CD8-positive, alpha-beta memory T cell (primary cell): ENCODE measurements at regions of chr1 and their contacts with region 1.

Region 1: DNA sequence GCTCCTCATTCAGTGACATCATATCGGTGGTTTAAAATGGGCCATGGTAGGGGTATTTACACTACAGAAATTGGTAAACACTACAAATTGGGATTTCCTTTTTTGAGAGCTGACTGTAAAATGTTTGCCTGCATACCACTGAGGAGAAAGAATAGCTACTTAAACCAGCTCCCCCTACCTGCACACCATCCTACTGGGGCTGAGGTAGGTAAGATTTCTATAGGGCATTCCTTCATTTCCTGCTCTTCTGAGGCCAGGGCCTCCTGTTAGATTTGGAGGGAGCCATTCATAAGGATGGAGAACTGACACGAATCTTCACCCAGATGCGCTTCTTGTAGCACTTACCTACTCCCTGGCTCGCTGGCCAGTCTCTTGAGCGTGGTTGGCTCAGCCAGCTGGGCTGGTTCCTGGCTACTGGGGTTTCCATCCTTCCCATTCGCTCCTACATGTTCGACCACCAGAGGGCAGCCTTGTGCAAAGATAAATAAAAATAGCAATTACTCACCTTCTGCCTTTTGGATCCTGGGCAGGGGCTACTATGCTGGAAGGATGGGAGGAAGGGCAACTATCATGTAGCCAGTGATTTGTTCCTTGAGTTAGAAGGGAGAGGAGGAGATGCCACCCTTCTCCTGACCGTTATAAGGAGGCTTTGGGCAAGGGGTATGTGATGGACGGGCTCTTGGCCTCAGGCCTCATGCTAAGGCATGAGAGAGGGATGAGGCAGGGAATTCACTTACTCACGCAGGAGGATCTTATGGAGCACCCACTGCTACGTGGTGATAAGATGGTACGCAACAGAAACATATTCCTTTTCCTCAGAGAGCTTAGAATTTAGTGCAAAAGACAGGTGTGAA is 10.7 kb downstream of the OPTC start:
- DNase-seq: peak; percentile 51 to 77 (median 58)
- H3K4me3 ChIP-seq: no peak overlapping the region
- H3K4me3 Mint-ChIP-seq: no peak overlapping the region
- H3K27ac ChIP-seq: no peak overlapping the region
- H3K27ac Mint-ChIP-seq: no peak overlapping the region
- H3K4me1 ChIP-seq: no peaks in the 10 kb centered on the region
- H3K4me1 Mint-ChIP-seq: peaks cover 1 to 6% (median 5%) of the 10 kb centered on the region in 3 donors
- H3K27me3 ChIP-seq: no peaks in the 10 kb centered on the region
- H3K27me3 Mint-ChIP-seq: peaks cover 3 to 4% of the 10 kb centered on the region in 2 donors

Region 2: DNA sequence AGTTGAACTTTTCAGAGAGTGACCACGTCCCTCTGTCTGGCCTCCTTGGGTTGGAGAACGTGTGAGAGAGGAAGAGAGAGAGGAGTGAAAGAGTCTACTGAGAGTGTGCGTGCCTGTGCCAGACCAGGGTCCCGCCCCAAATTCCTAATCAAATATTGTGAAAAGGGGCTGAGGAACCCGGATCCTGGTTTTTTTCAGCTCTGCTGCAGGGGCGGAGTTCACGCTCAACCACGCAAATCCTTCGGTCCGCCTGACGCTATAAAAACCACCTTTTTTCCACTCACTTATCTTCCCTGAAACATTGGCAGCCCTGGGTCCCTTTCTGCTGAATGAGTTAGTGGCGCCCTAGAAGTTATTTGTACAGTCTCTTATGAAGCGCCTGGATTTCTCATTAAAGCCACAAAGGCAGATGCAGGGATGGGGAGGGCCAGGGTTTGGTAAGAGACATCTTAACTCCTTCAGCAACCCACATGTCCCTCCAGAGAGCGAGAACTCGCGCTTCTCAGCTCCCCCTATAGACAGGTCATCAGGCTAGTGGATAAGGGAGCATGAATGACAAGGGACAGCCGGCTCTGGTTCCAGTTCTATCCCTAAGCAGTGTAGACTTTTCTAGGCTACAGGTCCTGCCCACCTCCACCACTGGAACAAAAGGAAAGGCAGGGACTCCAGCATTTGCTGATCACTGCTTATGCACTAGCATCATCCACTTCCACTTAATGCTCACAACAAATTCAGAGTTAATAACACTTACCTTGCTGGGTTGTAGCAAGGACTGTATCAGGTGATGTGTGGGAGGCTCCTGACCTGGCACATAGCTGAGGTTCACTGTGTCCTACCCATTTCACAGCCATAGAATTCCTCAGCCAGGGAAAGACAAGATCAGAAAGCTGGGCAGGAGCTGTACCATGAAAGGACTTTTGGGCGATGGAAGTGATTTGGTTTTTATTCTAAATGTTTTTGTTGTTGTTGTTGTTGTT is 153.3 kb before region 1 on chr1 and contains the start of gene FMOD:
- CTCF ChIA-PET with region 1: no interaction called
- POLR2A ChIA-PET with region 1: no interaction called
- DNase-seq: no peak
- H3K4me3 ChIP-seq: no peak within 1 kb of the TSS
- H3K4me3 Mint-ChIP-seq: no peak within 1 kb of the TSS
- H3K27ac ChIP-seq: no peak within 1 kb of the TSS
- H3K27ac Mint-ChIP-seq: no peak within 1 kb of the TSS
- H3K4me1 ChIP-seq: no peaks in the 10 kb centered on the region
- H3K4me1 Mint-ChIP-seq: peaks cover 0 to 3% (median 0%) of the 10 kb centered on the region in 3 donors
- H3K27me3 ChIP-seq: peaks cover 19% of the 10 kb centered on the region
- H3K27me3 Mint-ChIP-seq: peaks cover 32 to 79% of the 10 kb centered on the region in 2 donors
- total RNA-seq, gene FMOD: 0.51 to 1.2 TPM

Region 3: GRCh38 chr1:203480525-203481084 is 24.0 kb before region 1 on chr1:
- CTCF ChIA-PET with region 1: no interaction called
- POLR2A ChIA-PET with region 1: no interaction called
- DNase-seq: peak; percentile 9 to 81 (median 17)
- H3K4me3 ChIP-seq: no peak overlapping the region
- H3K4me3 Mint-ChIP-seq: no peak overlapping the region
- H3K27ac ChIP-seq: no peak overlapping the region
- H3K27ac Mint-ChIP-seq: peak overlapping the region in 2 of 8 donors; percentile 12 to 13
- H3K4me1 ChIP-seq: no peaks in the 10 kb centered on the region
- H3K4me1 Mint-ChIP-seq: peaks cover 5 to 12% (median 12%) of the 10 kb centered on the region in 3 donors
- H3K27me3 ChIP-seq: peaks cover 5% of the 10 kb centered on the region
- H3K27me3 Mint-ChIP-seq: peaks cover 1 to 15% of the 10 kb centered on the region in 2 donors

Region 4: GRCh38 chr1:203517426-203518110 is 12.9 kb after region 1 on chr1:
- CTCF ChIA-PET with region 1: interaction called, 10 read pairs
- POLR2A ChIA-PET with region 1: no interaction called
- DNase-seq: no peak
- H3K4me3 ChIP-seq: no peak overlapping the region
- H3K4me3 Mint-ChIP-seq: no peak overlapping the region
- H3K27ac ChIP-seq: no peak overlapping the region
- H3K27ac Mint-ChIP-seq: peak overlapping the region in 1 of 8 donors; percentile 9
- H3K4me1 ChIP-seq: peaks cover 18% of the 10 kb centered on the region
- H3K4me1 Mint-ChIP-seq: peaks cover 0 to 1% (median 0%) of the 10 kb centered on the region in 3 donors
- H3K27me3 ChIP-seq: no peaks in the 10 kb centered on the region
- H3K27me3 Mint-ChIP-seq: peaks cover 8 to 11% of the 10 kb centered on the region in 2 donors

Region 5: DNA sequence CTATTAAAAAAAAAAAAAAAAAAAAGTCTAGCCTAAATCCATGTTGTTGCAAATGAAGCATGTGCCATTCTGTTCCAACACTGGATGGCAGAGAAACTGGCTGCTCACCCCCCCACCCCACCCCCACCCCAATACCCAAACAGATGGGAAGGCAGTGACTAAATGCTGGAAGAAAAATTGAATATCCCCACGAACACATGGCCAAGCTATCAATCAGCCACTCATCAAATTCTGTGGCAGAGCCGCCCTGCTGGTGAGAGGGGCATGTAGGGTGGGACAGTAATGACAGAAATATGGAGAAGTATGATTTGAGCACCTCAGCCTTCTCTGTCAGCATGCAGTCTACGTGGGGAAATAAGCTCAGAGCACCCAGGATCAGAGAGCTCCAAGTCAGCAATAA is 23.4 kb after region 1 on chr1:
- CTCF ChIA-PET with region 1: no interaction called
- POLR2A ChIA-PET with region 1: no interaction called
- DNase-seq: no peak
- H3K4me3 ChIP-seq: no peak overlapping the region
- H3K4me3 Mint-ChIP-seq: no peak overlapping the region
- H3K27ac ChIP-seq: no peak overlapping the region
- H3K27ac Mint-ChIP-seq: no peak overlapping the region
- H3K4me1 ChIP-seq: no peaks in the 10 kb centered on the region
- H3K4me1 Mint-ChIP-seq: peaks cover 0 to 1% (median 0%) of the 10 kb centered on the region in 3 donors
- H3K27me3 ChIP-seq: no peaks in the 10 kb centered on the region
- H3K27me3 Mint-ChIP-seq: no peaks in the 10 kb centered on the region

Region 6: GRCh38 chr1:203765029-203765837 is 260.6 kb after region 1 on chr1 and contains the start of gene LAX1:
- CTCF ChIA-PET with region 1: interaction called, 10 read pairs
- POLR2A ChIA-PET with region 1: no interaction called
- DNase-seq: peak; percentile 59 to 88 (median 74)
- H3K4me3 ChIP-seq: peak within 1 kb of the TSS; percentile 82
- H3K4me3 Mint-ChIP-seq: peak within 1 kb of the TSS; percentile 95 to 100 (median 98)
- H3K27ac ChIP-seq: peak within 1 kb of the TSS; percentile 78
- H3K27ac Mint-ChIP-seq: peak within 1 kb of the TSS; percentile 94 to 100 (median 98)
- H3K4me1 ChIP-seq: peaks cover 55% of the 10 kb centered on the region
- H3K4me1 Mint-ChIP-seq: peaks cover 52 to 75% (median 72%) of the 10 kb centered on the region in 3 donors
- H3K27me3 ChIP-seq: no peaks in the 10 kb centered on the region
- H3K27me3 Mint-ChIP-seq: peaks cover 0 to 2% of the 10 kb centered on the region in 2 donors
- total RNA-seq, gene LAX1: 32.2 to 32.4 TPM